ENCODE measurements at regions of chr14 and their contacts with region 1.

Region 1: DNA sequence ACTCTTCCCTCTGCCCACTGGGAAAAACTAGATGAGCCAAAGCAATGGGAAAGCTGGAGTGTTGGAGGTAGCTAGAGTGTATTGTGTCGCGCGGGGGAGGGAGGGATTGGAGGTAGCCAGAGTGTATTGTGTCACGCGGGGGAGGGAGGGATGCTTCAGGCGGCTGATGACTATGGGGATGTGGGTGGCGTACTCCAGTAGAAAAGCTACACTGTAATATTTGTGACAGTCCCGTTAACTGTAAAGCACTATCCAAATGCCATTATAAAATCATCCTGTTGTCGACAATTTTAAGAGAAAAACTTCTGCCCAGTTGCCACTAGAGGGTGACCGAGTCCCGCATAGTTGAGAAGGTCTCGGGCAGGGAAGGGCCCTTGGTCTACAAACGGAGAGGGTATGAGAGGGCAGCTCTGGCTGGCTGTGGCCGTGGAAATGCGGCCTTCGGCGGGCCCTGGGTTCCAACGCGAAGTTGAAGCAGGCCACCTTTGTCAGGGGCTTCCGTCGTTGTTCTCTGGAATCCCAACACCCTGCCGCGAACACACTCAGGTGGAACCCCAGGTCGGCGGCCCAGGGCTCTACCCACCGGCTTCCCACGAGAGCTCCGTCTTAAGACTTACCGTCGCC is 15.1 kb upstream of the PLEK2 start:
- DNase-seq: peak; percentile 63 to 77
- ATAC-seq: peak; percentile 72 to 96 (median 88)
- H3K4me3 ChIP-seq: no peak overlapping the region
- H3K27ac ChIP-seq: no peak overlapping the region
- H3K4me1 ChIP-seq: peaks cover 0 to 15% (median 0%) of the 10 kb centered on the region in 9 donors
- H3K27me3 ChIP-seq: peaks cover 0 to 25% (median 4%) of the 10 kb centered on the region in 7 donors
- CTCF ChIP-seq: peak; percentile 46 to 85 (median 82)

Region 2: GRCh38 chr14:67479974-67480373 is 52.9 kb after region 1 on chr14:
- intact Hi-C with region 1: loop called in 2 of 10 experiments (anchors 5 kb)
- DNase-seq: no peak
- ATAC-seq: no peak
- H3K4me3 ChIP-seq: no peak overlapping the region
- H3K27ac ChIP-seq: no peak overlapping the region
- H3K4me1 ChIP-seq: peaks cover 0 to 16% (median 6%) of the 10 kb centered on the region in 9 donors
- H3K27me3 ChIP-seq: no peaks in the 10 kb centered on the region
- CTCF ChIP-seq: no peak

Region 3: GRCh38 chr14:67487937-67488893 is 61.1 kb after region 1 on chr14 and contains the start of gene TMEM229B:
- intact Hi-C with region 1: loop called in 2 of 10 experiments (anchors 1 to 5 kb)
- DNase-seq: peak; percentile 33 to 43
- ATAC-seq: peak in 7 of 8 donors; percentile 34 to 84 (median 67)
- H3K4me3 ChIP-seq: peak within 1 kb of the TSS; percentile 27 to 64 (median 54)
- H3K27ac ChIP-seq: peak within 1 kb of the TSS in 9 of 10 donors; percentile 49 to 91 (median 76)
- H3K4me1 ChIP-seq: peaks cover 3 to 48% (median 22%) of the 10 kb centered on the region in 9 donors
- H3K27me3 ChIP-seq: no peaks in the 10 kb centered on the region
- CTCF ChIP-seq: no peak
- total RNA-seq, gene TMEM229B: 1.00 to 5.9 (median 1.7) TPM

Region 4: GRCh38 chr14:67571272-67571850 is 144.3 kb after region 1 on chr14:
- intact Hi-C with region 1: loop called (anchors 1 to 5 kb)
- DNase-seq: peak; percentile 57 to 64
- ATAC-seq: peak; percentile 70 to 86 (median 76)
- H3K4me3 ChIP-seq: no peak overlapping the region
- H3K27ac ChIP-seq: no peak overlapping the region
- H3K4me1 ChIP-seq: no peaks in the 10 kb centered on the region
- H3K27me3 ChIP-seq: no peaks in the 10 kb centered on the region
- CTCF ChIP-seq: peak; percentile 63 to 84 (median 83)

Region 5: DNA sequence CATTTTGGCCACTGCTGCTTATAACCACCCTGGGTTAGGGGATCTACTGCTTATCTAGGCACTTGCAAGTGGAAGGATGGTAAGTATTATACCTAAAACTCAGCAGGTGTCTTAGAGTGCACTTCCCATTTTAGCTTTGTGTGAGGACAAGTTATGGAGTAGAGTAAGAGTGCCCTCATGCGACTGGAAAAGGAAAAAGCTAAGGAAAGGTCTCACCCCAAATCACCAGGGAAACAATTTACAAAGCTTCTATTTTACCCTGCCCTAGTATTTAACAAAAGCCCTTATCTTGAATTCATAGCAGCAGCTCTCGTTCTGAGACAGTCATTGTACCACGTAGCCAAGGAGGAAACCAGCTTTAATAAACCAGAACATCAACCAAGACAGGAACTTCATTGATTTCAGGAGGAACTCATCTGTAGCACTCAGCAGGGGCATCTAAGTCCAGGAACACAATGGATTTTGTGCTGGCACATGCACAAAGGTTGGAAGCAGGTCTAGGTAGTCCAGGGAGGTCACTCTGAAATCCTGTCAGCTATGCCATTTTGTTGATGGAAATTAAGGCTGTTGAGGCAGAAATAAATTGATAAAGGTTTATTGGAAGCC is 277.5 kb after region 1 on chr14:
- intact Hi-C with region 1: loop called in 8 of 10 experiments (anchors 2 to 10 kb)
- DNase-seq: peak in 1 of 2 donors; percentile 16
- ATAC-seq: peak in 7 of 8 donors; percentile 58 to 85 (median 77)
- H3K4me3 ChIP-seq: no peak overlapping the region
- H3K27ac ChIP-seq: no peak overlapping the region
- H3K4me1 ChIP-seq: peaks cover 0 to 4% (median 0%) of the 10 kb centered on the region in 9 donors
- H3K27me3 ChIP-seq: no peaks in the 10 kb centered on the region
- CTCF ChIP-seq: peak; percentile 45 to 87 (median 76)